ENCODE measurements at regions of chr6 and their contacts with region 1.

Region 1: DNA sequence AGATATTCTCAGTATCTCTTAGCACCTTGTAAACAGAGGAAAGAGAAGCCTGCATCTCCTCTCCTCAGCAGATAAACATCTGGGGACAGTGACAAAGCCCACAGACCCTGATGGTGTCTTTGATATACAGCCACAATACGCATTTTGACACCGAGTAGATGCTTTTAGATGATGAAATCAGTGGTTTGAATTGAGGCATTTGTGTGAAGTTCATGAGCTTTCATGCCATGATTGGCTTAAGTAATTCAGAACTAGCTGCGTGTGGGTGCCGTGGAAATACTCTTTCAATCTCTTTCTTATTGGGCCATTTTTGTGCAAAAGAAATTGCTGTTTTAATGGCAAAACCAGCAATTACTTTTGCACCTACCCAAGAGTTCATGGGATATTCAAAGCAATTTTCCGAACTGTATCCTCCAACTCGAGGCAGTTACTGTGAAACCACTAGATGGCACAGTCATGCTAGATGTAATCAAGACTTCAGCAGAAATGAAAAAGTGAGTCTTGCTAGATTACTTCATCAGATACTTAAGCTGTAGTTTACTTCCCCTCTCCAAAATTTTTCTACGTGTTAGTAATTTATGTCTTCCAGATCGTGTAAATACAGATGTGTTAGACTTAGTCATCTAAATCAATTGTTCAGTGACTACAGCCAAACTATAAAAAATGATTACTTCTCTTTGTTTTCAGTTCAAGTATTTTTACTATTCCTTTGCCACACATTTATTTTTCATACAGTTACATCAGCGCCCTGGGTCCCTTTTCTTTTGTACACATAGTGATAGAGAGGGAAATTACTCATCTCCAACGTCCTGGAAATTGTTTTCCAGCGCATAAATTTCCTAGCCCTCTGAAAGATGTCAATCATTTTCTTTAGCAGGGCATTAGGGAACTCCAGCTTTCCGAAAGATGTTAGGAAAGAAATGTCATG is 49.4 kb downstream of the IYD start:
- DNase-seq: no peak
- ATAC-seq: peak; percentile 67
- H3K4me3 Mint-ChIP-seq: no peak overlapping the region
- H3K27ac Mint-ChIP-seq: no peak overlapping the region
- H3K4me1 Mint-ChIP-seq: peaks cover 6% of the 10 kb centered on the region
- H3K27me3 Mint-ChIP-seq: no peaks in the 10 kb centered on the region
- CTCF ChIP-seq: no peak

Region 2: GRCh38 chr6:150276937-150277742 is 141.0 kb before region 1 on chr6:
- CTCF ChIA-PET with region 1: no interaction called
- POLR2A ChIA-PET with region 1: no interaction called
- DNase-seq: no peak
- ATAC-seq: no peak
- H3K4me3 Mint-ChIP-seq: no peak overlapping the region
- H3K27ac Mint-ChIP-seq: no peak overlapping the region
- H3K4me1 Mint-ChIP-seq: peaks cover 5% of the 10 kb centered on the region; the same call in 1 of the 2 replicates
- H3K27me3 Mint-ChIP-seq: no peaks in the 10 kb centered on the region
- CTCF ChIP-seq: no peak

Region 3: GRCh38 chr6:150395398-150396009 is 22.7 kb before region 1 on chr6:
- CTCF ChIA-PET with region 1: interaction called, 10 read pairs
- POLR2A ChIA-PET with region 1: no interaction called
- DNase-seq: peak; percentile 63
- ATAC-seq: peak; percentile 96
- H3K4me3 Mint-ChIP-seq: no peak overlapping the region
- H3K27ac Mint-ChIP-seq: no peak overlapping the region
- H3K4me1 Mint-ChIP-seq: no peaks in the 10 kb centered on the region
- H3K27me3 Mint-ChIP-seq: peaks cover 11% of the 10 kb centered on the region
- CTCF ChIP-seq: peak; percentile 51

Region 4: DNA sequence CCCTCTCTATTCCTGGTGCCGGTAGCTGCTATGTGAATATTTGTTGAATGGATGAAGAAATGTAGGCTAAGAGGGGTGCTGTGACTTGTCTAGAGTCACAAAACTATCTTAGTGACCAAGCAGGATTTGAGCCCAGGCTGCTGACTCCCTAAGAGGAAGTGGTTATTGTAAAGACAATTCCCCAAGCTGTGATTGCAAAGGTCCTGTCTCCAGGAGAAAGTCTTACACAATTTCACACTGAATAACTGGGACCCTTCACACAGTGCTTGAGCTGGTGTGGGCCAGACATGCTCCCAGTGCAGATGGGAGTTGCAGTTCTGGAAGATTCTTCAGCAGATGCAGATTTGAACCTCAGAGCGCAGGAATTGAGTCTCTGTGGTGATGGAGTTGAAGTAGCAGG is 11.2 kb before region 1 on chr6:
- CTCF ChIA-PET with region 1: no interaction called
- POLR2A ChIA-PET with region 1: no interaction called
- DNase-seq: no peak
- ATAC-seq: no peak
- H3K4me3 Mint-ChIP-seq: no peak overlapping the region
- H3K27ac Mint-ChIP-seq: no peak overlapping the region
- H3K4me1 Mint-ChIP-seq: no peaks in the 10 kb centered on the region; the same call in 1 of the 2 replicates
- H3K27me3 Mint-ChIP-seq: no peaks in the 10 kb centered on the region; the same call in 1 of the 2 replicates
- CTCF ChIP-seq: no peak

Region 5: GRCh38 chr6:150486034-150486433 is 67.9 kb after region 1 on chr6:
- CTCF ChIA-PET with region 1: no interaction called
- POLR2A ChIA-PET with region 1: no interaction called
- DNase-seq: no peak
- ATAC-seq: no peak
- H3K4me3 Mint-ChIP-seq: no peak overlapping the region
- H3K27ac Mint-ChIP-seq: no peak overlapping the region
- H3K4me1 Mint-ChIP-seq: no peaks in the 10 kb centered on the region
- H3K27me3 Mint-ChIP-seq: no peaks in the 10 kb centered on the region; the same call in 1 of the 2 replicates
- CTCF ChIP-seq: no peak

Region 6: GRCh38 chr6:150600301-150601017 is 182.3 kb after region 1 on chr6:
- CTCF ChIA-PET with region 1: interaction called, 20 read pairs
- POLR2A ChIA-PET with region 1: interaction called, 3 read pairs
- DNase-seq: peak; percentile 79
- ATAC-seq: peak; percentile 66
- H3K4me3 Mint-ChIP-seq: peak overlapping the region; percentile 89
- H3K27ac Mint-ChIP-seq: peak overlapping the region; percentile 23; the same call in 1 of the 2 replicates
- H3K4me1 Mint-ChIP-seq: peaks cover 19% of the 10 kb centered on the region
- H3K27me3 Mint-ChIP-seq: peaks cover 64% of the 10 kb centered on the region
- CTCF ChIP-seq: peak; percentile 8; the same call in 1 of the 2 replicates

Region 7: DNA sequence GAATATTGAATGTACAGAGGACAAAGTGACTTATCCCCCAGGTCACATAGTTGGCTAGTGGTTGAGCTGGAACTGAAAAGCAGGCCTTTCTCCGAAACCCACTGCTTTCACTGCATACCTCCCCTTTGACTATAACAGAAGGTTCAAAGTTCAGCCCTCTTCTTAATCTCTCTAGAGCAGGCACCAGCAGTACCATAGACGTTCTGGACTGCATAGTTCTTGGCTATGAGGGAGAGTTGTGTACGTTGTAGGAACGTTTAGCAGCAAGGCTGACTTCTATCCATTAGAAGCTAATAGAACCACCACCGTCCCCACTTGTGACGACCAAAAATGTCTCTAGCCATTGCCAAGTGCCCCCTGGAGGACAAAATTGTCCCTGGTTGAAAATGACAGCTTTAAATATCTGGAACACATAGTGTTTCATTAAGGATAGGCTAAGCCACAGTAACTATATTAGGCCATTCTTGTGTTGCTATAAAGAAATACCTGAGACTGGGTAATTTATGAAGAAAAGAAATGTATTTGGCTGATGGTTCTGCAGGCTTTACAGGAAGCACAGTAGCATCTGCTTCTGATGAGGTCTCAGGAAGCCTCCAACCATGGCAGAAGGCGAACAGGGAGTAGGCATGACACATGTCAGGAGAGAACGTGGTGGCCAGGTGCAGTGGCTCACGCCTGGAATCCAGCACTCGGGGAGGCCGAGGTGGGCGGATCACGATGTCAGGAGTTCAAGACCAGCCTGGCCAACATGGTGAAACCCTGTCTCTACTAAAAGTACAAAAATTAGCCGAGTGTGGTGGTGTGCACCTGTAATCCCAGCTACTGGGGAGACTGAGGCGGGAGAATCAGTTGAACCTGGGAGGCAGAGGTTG is 323.7 kb after region 1 on chr6:
- CTCF ChIA-PET with region 1: interaction called, 27 read pairs
- POLR2A ChIA-PET with region 1: no interaction called
- DNase-seq: peak; percentile 40
- ATAC-seq: peak; percentile 41
- H3K4me3 Mint-ChIP-seq: no peak overlapping the region
- H3K27ac Mint-ChIP-seq: no peak overlapping the region
- H3K4me1 Mint-ChIP-seq: no peaks in the 10 kb centered on the region
- H3K27me3 Mint-ChIP-seq: no peaks in the 10 kb centered on the region
- CTCF ChIP-seq: peak; percentile 43; the same call in 1 of the 2 replicates